Caco-2 (cell line): ENCODE measurements at regions of chr20 and their contacts with region 1.

Region 1: GRCh38 chr20:401682-402495 is 6.2 kb upstream of the RBCK1 start:
- DNase-seq: peak; percentile 92 to 94
- H3K4me3 ChIP-seq: no peak overlapping the region
- H3K4me3 Mint-ChIP-seq: peak overlapping the region; percentile 58
- H3K27ac Mint-ChIP-seq: peak overlapping the region; percentile 98
- H3K4me1 ChIP-seq: peaks cover 29% of the 10 kb centered on the region
- H3K4me1 Mint-ChIP-seq: peaks cover 28% of the 10 kb centered on the region
- H3K27me3 ChIP-seq: no peaks in the 10 kb centered on the region
- H3K27me3 Mint-ChIP-seq: no peaks in the 10 kb centered on the region
- CTCF ChIP-seq: no peak

Region 2: GRCh38 chr20:362271-363254 is 39.3 kb before region 1 on chr20:
- CTCF ChIA-PET with region 1: interaction called, 7 read pairs
- POLR2A ChIA-PET with region 1: no interaction called
- intact Hi-C with region 1: loop called (anchors 1 kb)
- DNase-seq: peak; percentile 68 to 74
- H3K4me3 ChIP-seq: no peak overlapping the region
- H3K4me3 Mint-ChIP-seq: no peak overlapping the region
- H3K27ac Mint-ChIP-seq: peak overlapping the region; percentile 49
- H3K4me1 ChIP-seq: peaks cover 66% of the 10 kb centered on the region
- H3K4me1 Mint-ChIP-seq: peaks cover 73% of the 10 kb centered on the region
- H3K27me3 ChIP-seq: no peaks in the 10 kb centered on the region
- H3K27me3 Mint-ChIP-seq: no peaks in the 10 kb centered on the region
- CTCF ChIP-seq: peak in 1 of 2 experiments; percentile 41

Region 3: DNA sequence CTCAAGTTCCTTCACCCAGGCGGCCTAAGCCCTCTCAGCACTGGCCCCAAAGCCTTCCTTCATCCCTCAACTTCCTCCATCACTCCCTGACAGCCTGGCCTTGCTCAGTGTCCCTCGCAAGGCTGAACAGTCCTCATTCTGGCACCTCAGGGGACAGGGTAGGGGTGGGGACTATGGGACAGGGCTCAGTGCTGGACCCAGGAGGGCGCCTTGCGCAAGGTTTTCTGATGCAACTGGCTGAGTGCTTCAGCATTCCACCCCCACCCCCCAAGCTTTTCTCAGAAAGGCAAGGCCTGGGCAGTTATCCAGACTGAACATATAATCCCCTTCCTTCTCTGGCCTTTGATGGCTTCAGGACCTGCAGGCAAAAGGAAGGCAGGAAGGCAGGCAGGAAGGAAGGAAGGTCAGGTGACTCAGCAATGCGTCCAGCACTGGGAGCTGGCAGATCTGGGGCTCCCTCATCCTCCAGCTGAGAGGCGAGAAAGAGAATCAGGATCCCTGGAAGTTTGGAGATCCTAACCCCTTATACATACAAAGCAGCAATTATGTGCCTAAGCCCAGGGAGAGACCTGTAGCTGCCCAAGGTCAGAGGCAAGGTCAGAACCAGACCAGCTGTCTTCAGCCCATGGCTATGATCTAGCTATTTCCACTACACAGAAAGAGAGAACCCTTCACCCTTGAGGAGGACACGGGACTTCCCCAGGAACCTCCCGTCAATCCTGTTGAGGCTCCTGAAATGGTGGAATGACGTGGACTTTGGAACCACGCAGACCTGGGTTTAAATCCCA is 29.9 kb before region 1 on chr20:
- CTCF ChIA-PET with region 1: no interaction called
- POLR2A ChIA-PET with region 1: interaction called, 4 read pairs
- intact Hi-C with region 1: loop called (anchors 1 kb)
- DNase-seq: peak; percentile 96 to 98
- H3K4me3 ChIP-seq: no peak overlapping the region
- H3K4me3 Mint-ChIP-seq: peak overlapping the region; percentile 66
- H3K27ac Mint-ChIP-seq: peak overlapping the region; percentile 99
- H3K4me1 ChIP-seq: peaks cover 68% of the 10 kb centered on the region
- H3K4me1 Mint-ChIP-seq: peaks cover 60% of the 10 kb centered on the region
- H3K27me3 ChIP-seq: no peaks in the 10 kb centered on the region
- H3K27me3 Mint-ChIP-seq: no peaks in the 10 kb centered on the region
- CTCF ChIP-seq: no peak

Region 4: DNA sequence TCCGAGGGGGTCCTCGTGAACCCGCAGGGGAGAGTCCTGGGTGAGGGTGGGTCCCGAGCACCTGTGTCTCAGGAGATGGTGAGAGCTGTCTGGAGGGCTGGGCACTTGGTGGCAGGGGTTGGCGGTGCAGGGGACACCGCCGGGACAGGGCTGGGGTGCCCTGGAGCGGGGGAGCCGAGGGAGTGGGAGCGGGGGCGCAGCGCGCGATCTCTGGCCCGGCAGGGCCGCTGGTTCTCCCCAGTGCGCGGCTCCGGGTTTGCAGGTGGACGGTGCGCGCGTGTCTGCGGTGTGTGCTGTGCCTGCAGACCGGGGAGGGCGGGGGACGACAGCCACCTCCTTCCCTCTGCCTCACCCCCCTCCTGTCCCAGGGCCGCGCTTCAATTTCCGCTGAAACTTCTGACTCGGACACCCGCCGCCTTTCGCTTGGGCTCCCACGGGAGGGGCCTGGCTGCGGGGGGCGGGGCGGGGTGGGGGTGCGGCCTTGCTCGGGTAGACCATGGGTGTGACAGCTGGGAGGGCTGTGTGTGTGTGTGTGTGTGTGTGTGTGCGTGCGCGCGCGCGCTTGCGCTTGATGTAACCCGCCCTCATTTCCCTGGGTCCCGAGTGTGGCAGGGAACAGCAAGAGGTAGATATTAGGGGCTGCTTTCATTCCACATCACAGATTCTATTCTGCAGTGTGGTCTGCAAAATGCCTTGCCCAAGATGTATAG is 20.2 kb before region 1 on chr20:
- CTCF ChIA-PET with region 1: interaction called, 5 read pairs
- POLR2A ChIA-PET with region 1: interaction called, 7 read pairs
- intact Hi-C with region 1: loop called (anchors 1 kb)
- DNase-seq: peak; percentile 83 to 85
- H3K4me3 ChIP-seq: peak overlapping the region; percentile 97
- H3K4me3 Mint-ChIP-seq: peak overlapping the region; percentile 83
- H3K27ac Mint-ChIP-seq: peak overlapping the region; percentile 92
- H3K4me1 ChIP-seq: peaks cover 12% of the 10 kb centered on the region
- H3K4me1 Mint-ChIP-seq: peaks cover 19% of the 10 kb centered on the region
- H3K27me3 ChIP-seq: no peaks in the 10 kb centered on the region
- H3K27me3 Mint-ChIP-seq: no peaks in the 10 kb centered on the region
- CTCF ChIP-seq: no peak

Region 5: GRCh38 chr20:462199-462991 is 60.5 kb after region 1 on chr20 and contains the start of gene TBC1D20:
- CTCF ChIA-PET with region 1: no interaction called
- POLR2A ChIA-PET with region 1: no interaction called
- intact Hi-C with region 1: loop called (anchors 5 kb)
- DNase-seq: peak; percentile 84 to 91
- H3K4me3 ChIP-seq: peak within 1 kb of the TSS; percentile 74
- H3K4me3 Mint-ChIP-seq: peak within 1 kb of the TSS; percentile 98
- H3K27ac Mint-ChIP-seq: peak within 1 kb of the TSS; percentile 94
- H3K4me1 ChIP-seq: peaks cover 15% of the 10 kb centered on the region
- H3K4me1 Mint-ChIP-seq: peaks cover 15% of the 10 kb centered on the region
- H3K27me3 ChIP-seq: no peaks in the 10 kb centered on the region
- H3K27me3 Mint-ChIP-seq: no peaks in the 10 kb centered on the region
- CTCF ChIP-seq: no peak
- total RNA-seq, gene TBC1D20: 30.0 and 35.8 TPM in 2 replicates